ENCODE measurements at regions of chr3 and their contacts with region 1.

Region 1: DNA sequence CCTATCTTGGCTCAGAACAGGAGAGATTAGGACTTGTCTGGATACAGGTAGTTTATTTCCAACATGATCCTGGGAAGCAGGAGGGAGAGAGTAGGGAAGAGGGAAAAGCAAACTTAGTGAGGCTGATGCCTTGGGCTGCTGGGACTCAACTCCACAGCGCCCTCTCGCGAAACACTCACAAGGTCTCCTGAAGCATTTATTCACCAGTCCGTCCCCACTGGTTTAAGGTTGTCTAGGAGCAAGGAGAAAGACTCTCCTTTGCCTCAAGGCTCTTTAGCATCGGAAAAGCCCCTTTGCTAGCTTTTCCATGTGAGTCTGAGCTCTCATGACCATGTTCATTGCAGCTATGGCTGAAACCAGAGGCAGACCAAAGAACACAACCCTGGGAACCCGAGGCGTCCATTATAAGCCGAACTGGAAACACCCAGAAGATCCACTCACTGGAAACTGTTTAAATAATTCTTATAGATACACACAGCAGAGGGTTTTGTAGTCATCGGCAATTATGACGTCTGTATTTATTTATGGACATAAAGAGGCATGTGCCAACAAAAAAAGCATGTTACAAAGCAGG is 244.5 kb downstream of the CD47 start:
- DNase-seq: peak; percentile 68 to 90 (median 81)
- ATAC-seq: peak; percentile 85 to 89
- H3K4me3 ChIP-seq: no peak overlapping the region
- H3K27ac ChIP-seq: no peak overlapping the region
- H3K4me1 ChIP-seq: no peaks in the 10 kb centered on the region
- H3K27me3 ChIP-seq: no peaks in the 10 kb centered on the region

Region 2: DNA sequence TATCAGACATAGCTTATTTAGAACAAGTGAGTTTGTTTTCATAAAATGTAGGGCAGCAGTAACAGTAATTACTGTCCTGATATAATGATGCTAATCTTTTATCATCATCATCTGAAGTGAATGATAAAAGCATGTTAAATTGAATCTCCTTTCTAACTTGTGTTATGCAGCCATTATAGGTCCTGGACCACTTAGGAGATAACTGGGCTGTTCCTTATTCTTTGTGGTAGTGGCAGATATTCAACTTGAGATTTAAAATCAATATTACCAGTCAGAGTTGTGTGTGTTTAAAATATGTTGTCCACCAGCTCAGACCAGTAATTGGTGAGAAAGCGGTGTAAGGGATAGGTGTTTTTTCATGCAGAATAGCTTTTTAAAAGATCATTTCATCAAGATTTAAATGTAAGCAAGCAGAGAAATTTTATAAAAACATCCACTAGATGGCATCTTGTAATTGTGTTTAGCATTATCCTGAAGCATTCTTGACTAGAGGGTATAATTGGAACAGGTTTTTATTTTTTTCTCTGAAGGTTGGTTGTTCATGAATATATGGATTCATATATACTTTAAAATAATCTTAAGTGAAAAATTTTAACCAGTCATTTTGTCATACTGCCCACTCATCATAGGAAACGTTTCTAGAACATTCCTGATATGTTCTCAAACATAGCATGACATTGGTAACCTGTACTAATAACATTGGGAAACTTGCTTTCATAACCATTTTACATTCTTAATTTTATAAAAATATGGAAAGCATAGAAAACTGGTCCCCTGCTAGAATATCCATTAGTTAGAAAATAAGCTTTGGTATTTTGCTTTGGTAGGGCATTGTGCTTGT is 169.7 kb before region 1 on chr3:
- intact Hi-C with region 1: loop called in 1 of 4 experiments (anchors 10 kb)
- DNase-seq: no peak
- ATAC-seq: peak in 1 of 2 donors; percentile 20
- H3K4me3 ChIP-seq: no peak overlapping the region
- H3K27ac ChIP-seq: no peak overlapping the region
- H3K4me1 ChIP-seq: no peaks in the 10 kb centered on the region
- H3K27me3 ChIP-seq: no peaks in the 10 kb centered on the region

Region 3: GRCh38 chr3:107753480-107753879 is 92.9 kb before region 1 on chr3:
- intact Hi-C with region 1: loop called in 1 of 4 experiments (anchors 10 kb)
- DNase-seq: peak in 2 of 3 donors; percentile 26 to 50
- ATAC-seq: peak; percentile 73 to 79
- H3K4me3 ChIP-seq: no peak overlapping the region
- H3K27ac ChIP-seq: no peak overlapping the region
- H3K4me1 ChIP-seq: no peaks in the 10 kb centered on the region
- H3K27me3 ChIP-seq: no peaks in the 10 kb centered on the region

Region 4: DNA sequence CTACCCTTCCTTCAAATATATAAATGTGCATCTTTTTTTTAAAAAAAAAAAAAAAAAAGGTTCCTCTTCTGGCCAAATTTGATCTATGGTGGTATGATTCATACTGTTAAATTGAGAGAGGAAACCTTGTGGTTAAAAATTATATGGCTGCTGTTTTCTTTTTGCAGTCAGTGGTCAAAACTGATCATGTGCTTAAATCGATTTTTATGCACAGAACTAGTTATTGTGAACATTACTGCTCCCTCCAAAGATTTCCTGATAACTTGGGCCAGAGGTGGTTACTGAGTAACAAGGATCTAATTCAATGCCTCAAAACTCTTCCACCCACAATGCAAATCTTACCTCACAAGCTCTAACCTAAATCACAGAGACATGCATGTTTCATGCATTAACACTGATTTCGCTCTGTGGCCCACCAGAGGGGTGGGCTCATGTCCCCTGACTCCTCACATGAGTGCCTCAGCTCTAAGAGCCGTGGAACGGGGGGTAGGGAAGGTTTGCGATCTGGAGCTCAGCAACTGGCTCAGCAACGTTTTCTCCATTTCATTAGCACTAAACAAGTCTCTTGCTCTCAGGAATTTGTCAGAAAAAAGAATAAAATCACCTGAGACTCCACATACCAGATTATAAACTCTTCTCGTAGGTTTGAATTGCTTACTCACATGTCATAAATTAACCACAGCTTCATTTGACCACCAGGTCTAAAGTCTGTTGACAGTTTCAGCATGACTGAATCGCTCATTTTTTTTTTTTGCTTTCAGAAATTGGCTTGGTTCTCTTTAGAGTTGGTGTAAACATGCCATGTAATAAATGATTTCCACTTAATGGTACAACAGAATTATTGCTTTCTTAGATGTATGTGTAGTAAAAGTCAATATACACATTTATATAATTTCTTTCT is 35.9 kb before region 1 on chr3:
- intact Hi-C with region 1: loop called in 1 of 4 experiments (anchors 2 kb)
- DNase-seq: no peak
- ATAC-seq: no peak
- H3K4me3 ChIP-seq: no peak overlapping the region
- H3K27ac ChIP-seq: no peak overlapping the region
- H3K4me1 ChIP-seq: no peaks in the 10 kb centered on the region
- H3K27me3 ChIP-seq: no peaks in the 10 kb centered on the region

Measured in right cardiac atrium (tissue), 5 donors.